BJ (cell line): ENCODE measurements at regions of chr1 and their contacts with region 1.

Region 1: DNA sequence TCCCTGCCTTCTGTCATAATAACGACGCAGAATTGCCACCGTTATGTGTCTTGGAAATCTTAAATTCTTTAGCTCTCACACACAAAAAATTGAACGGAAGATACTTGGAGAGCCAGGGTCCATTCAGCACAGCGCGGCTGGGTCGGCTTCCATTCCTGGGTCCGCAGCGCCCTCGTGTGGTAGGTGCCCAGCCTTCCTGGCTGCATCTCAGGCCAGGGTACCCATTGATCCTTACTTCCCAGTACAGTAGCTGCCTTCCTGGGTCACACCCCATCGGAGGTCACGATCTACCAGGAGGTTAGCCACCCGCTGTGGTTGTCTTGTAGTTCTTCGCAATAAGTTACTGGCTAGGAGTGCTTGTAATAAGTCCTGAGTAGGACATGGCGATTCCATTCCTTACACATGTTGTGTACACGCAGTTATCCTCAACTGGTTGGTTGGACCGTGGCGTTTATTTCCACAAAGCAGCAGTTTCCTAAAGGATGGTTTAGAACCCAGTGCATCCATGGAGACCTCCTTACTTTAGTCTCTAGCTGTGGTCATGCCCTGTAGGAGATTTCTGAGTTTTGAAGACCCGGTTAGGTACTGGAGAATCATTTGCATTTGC is 9.9 kb upstream of the MTARC1 start:
- DNase-seq: peak; percentile 4
- H3K4me3 ChIP-seq: no peak overlapping the region
- H3K27me3 ChIP-seq: no peaks in the 10 kb centered on the region
- CTCF ChIP-seq: peak; percentile 93

Region 2: DNA sequence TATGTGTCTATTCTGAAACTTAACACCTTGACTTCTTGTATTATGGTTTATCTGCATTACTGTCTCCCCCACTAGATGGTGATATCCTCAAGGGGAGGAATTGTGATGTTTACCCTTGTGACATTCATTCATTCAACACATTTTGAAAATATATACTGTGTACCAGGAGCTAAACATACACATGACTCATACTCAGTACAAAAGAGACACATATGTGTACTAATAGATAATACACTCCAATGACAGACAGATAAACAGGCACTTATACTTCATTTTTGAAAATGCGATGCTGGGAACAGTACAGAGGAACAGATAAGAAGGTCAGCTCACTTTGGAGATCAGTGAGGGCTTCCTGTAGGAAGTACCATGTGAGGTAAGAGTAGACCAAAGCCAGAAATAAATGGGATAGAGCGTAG is 495.7 kb before region 1 on chr1:
- CTCF ChIA-PET with region 1: interaction called, 35 read pairs
- POLR2A ChIA-PET with region 1: no interaction called
- DNase-seq: no peak
- H3K4me3 ChIP-seq: no peak overlapping the region
- H3K27me3 ChIP-seq: peaks cover 9% of the 10 kb centered on the region
- CTCF ChIP-seq: peak; percentile 68

Region 3: GRCh38 chr1:220669005-220669404 is 107.8 kb before region 1 on chr1:
- CTCF ChIA-PET with region 1: interaction called, 12 read pairs
- POLR2A ChIA-PET with region 1: no interaction called
- DNase-seq: no peak
- H3K4me3 ChIP-seq: no peak overlapping the region
- H3K27me3 ChIP-seq: no peaks in the 10 kb centered on the region
- CTCF ChIP-seq: no peak

Region 4: GRCh38 chr1:220690140-220691025 is 86.4 kb before region 1 on chr1 and contains the start of gene C1orf115:
- CTCF ChIA-PET with region 1: interaction called, 35 read pairs
- POLR2A ChIA-PET with region 1: no interaction called
- DNase-seq: no peak
- H3K4me3 ChIP-seq: peak within 1 kb of the TSS; percentile 67
- H3K27me3 ChIP-seq: peaks cover 5% of the 10 kb centered on the region; the same call in 1 of the 2 replicates
- CTCF ChIP-seq: peak; percentile 78
- polyA plus RNA-seq, gene C1orf115: 3.8 and 3.9 TPM in 2 replicates

Region 5: DNA sequence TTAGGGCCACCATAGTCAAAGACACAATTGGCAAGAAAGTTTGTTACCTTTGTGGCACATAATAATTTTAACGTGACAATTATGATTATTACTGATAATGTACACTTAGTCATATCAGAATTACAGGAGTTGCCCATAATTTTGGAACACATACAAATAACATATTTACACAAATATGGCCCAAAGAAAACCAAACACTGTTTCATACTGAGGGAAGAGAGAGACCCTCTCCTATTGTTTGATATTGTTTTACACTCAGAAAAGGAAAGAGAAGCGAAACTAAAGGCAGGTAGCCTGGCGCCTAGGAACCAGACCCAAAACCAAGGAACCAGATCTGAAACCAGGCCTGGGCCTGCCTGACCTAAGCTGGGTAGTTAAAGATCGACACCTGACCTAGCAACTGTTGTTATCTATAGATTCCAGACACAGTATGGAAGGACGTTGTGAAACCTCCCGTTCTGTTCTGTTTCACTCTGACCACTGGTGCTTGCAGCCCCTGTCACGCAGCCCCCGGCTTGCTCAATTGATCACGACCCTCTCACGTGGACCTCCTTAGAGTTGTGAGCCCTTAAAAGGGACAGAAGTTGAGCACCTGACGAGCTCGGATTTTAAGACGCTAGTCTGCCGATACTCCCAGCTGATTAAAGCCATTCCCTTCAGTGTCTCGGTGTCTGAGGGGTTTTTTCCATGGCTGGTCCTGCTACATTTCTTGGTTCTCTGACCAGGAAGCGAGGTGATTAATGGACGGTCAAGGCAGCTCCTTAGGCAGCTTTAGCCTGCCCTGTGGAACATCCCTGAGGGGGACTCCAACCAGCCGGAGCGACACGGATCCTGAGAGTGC is 58.8 kb before region 1 on chr1:
- CTCF ChIA-PET with region 1: no interaction called
- POLR2A ChIA-PET with region 1: no interaction called
- DNase-seq: no peak
- H3K4me3 ChIP-seq: no peak overlapping the region
- H3K27me3 ChIP-seq: no peaks in the 10 kb centered on the region
- CTCF ChIP-seq: no peak

Region 6: DNA sequence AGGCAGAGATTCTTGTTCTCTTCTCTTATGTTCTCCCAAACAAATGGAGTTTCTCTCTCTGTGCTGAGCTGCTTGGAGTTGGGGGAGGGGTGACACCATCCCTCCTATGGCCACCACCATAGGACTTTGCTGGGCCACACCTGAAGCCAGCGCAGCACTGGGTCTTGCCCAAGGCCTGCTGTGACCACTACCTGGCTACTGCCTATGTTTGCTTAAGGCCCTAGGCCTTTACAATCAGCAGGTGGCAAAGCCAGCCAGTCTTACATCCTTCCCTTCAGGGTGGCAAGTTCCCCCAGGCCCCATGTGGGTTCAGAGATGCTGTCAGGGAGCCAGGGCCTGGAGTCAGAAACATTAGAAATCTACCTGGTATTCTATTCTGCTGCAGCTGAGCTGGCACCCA is 35.0 kb before region 1 on chr1:
- CTCF ChIA-PET with region 1: interaction called, 11 read pairs
- POLR2A ChIA-PET with region 1: no interaction called
- DNase-seq: no peak
- H3K4me3 ChIP-seq: no peak overlapping the region
- H3K27me3 ChIP-seq: 0 out of 2 replicates have a peak, but pooled peaks cover 2% of the 10 kb centered on the region
- CTCF ChIP-seq: no peak

Region 7: GRCh38 chr1:220748089-220748934 is 28.5 kb before region 1 on chr1 and contains the start of gene MTARC2:
- CTCF ChIA-PET with region 1: interaction called, 11 read pairs
- POLR2A ChIA-PET with region 1: no interaction called
- DNase-seq: peak; percentile 51
- H3K4me3 ChIP-seq: peak within 1 kb of the TSS; percentile 66
- H3K27me3 ChIP-seq: no peaks in the 10 kb centered on the region
- CTCF ChIP-seq: no peak
- polyA plus RNA-seq, gene MTARC2: 5.7 and 6.1 TPM in 2 replicates

Region 8: GRCh38 chr1:220761688-220762427 is 15.0 kb before region 1 on chr1:
- CTCF ChIA-PET with region 1: interaction called, 89 read pairs
- POLR2A ChIA-PET with region 1: no interaction called
- DNase-seq: no peak
- H3K4me3 ChIP-seq: no peak overlapping the region
- H3K27me3 ChIP-seq: no peaks in the 10 kb centered on the region
- CTCF ChIP-seq: no peak